K562 (cell line): ENCODE measurements at regions of chr7 and their contacts with region 1.

Region 1: DNA sequence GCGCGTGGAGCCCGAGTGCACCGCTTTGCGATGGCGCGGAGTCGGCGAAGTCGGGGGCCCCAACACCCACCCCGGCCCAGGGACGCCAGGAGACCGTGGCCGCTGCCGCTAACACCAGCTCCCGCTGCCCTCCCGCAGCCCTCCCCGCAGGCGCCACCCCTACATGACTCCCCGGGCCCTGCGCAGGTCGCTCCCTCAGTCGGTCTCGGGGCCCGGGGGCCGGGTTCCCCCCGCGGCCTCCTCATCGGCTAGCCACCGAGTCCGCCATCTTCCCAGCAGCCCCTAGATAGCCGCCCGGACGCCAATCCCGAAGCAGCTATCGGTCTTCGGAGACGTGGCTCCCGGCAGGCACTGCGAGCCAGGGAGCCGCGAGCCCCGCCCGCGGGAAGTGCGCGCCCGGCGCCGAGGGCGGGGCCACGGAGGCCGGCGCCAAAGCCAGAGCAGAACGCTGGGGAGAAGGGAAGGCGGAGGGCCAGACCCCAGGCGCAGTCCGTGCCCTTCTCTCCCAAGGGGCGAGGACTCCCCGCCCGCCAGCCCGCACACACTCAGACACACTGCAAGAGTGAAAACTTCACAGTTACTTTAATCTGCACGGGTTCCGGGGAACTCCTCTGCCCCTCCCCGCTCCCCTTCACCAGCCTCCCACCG is at the start of gene FASTK:
- DNase-seq: peak; percentile 87 to 97 (median 92)
- ATAC-seq: peak; percentile 81
- H3K4me3 ChIP-seq: peak within 1 kb of the TSS; percentile 89
- H3K27ac ChIP-seq: peak within 1 kb of the TSS; percentile 94
- H3K4me1 ChIP-seq: peaks cover 48 to 88% of the 10 kb centered on the region in 2 experiments
- H3K27me3 ChIP-seq: no peaks in the 10 kb centered on the region
- CTCF ChIP-seq: no peak
- EP300 ChIP-seq: peak; percentile 22; the same call in 1 of the 2 replicates
- POLR2A ChIP-seq: peak; percentile 95
- RAD21 ChIP-seq: no peak
- polyA plus RNA-seq, gene FASTK: 0.51 to 2.7 TPM

Region 2: DNA sequence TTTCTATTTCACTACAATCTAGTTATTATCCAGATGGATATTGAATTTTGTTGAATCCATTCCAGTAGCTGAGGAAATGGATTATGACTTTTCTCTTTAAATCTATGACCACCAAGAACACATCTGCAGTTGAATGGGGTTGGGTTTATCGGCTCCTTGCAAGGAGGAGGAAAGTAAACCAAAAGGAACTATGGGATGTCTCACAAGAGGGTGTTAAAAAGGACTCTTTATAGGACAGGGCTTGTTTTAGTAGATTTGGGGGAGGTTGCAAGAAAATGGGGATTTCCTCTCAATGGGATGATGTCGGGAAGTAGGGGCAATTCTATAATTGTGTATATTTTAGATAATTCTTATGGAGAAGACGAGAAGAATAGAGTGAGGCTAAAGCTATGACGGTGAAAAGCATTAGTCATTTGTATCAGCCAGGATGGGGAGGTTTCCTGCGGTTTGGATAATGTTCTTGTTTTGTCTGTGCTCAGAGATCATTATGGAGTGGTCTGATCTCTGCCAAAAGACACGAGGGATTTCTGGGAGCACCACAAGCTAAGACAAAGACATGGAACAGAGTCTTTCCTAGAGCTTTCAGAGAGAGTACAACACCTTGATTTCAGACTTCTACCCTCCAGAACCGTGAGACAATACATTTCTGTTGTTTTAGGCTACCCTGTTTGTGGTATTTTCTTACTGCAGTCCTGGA is 762.8 kb before region 1 on chr7:
- CTCF ChIA-PET with region 1: no interaction called
- POLR2A ChIA-PET with region 1: no interaction called
- in situ Hi-C with region 1: no loop called
- intact Hi-C with region 1: loop called (anchors 10 kb)
- DNase-seq: peak; percentile 51 to 88 (median 60)
- ATAC-seq: peak; percentile 48
- H3K4me3 ChIP-seq: no peak overlapping the region
- H3K27ac ChIP-seq: peak overlapping the region; percentile 76
- H3K4me1 ChIP-seq: peaks cover 50 to 89% of the 10 kb centered on the region in 2 experiments
- H3K27me3 ChIP-seq: no peaks in the 10 kb centered on the region
- CTCF ChIP-seq: no peak
- EP300 ChIP-seq: peak; percentile 77
- POLR2A ChIP-seq: no peak
- RAD21 ChIP-seq: peak; percentile 11; a peak in 2 of 4 replicates

Region 3: GRCh38 chr7:150895809-150896208 is 184.8 kb before region 1 on chr7:
- CTCF ChIA-PET with region 1: no interaction called
- POLR2A ChIA-PET with region 1: no interaction called
- in situ Hi-C with region 1: no loop called
- intact Hi-C with region 1: no loop called
- DNase-seq: peak in 2 of 4 experiments; percentile 6 to 29
- ATAC-seq: no peak
- H3K4me3 ChIP-seq: no peak overlapping the region
- H3K27ac ChIP-seq: no peak overlapping the region
- H3K4me1 ChIP-seq: peaks cover 5 to 11% of the 10 kb centered on the region in 2 experiments; a peak in 3 of 5 replicates
- H3K27me3 ChIP-seq: peaks cover 22 to 38% of the 10 kb centered on the region in 2 experiments; a peak in 4 of 5 replicates
- CTCF ChIP-seq: no peak
- EP300 ChIP-seq: no peak
- POLR2A ChIP-seq: no peak
- RAD21 ChIP-seq: no peak

Region 4: DNA sequence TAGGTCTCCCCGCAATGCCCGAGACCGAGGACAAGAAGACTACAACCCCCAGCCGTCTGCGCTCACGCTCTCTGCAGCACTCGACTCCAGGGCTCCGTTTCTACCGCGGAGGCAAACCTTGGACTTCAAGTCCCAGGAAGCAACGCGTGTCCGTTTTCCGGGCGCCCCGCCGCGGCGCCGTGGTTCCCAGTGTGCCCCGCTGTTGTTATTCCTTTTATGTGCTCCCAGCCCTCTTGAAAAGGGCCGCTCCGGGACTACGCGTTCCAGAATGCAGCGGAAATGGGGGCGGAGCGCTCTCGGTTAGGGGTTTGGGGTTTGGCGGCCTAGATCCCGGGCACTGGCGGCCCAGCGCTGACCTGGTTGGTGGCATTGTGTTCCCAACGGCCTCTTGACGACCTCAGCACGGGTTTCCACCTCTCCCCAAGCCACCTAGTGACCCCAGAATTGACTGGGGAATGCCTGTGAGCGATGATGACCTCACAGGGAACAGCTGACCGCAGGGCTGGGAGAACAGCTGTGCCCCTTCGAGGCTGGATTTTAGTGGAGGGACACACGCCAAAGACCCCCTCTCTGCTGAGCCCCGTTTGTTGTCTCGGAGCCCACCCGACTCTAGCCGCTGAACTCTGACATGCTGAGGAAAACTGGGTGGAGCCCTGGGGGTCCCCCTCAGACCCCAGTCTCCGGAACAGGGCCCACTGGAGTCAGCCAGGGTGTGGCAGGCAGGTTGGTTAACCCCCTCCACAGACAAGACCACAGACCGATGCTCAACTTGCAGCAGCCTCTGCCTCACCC is 22.5 kb before region 1 on chr7:
- CTCF ChIA-PET with region 1: no interaction called
- POLR2A ChIA-PET with region 1: interaction called, 9 read pairs
- in situ Hi-C with region 1: no loop called
- intact Hi-C with region 1: loop called (anchors 1 kb)
- DNase-seq: peak; percentile 96 to 100 (median 98)
- ATAC-seq: peak; percentile 86
- H3K4me3 ChIP-seq: peak overlapping the region; percentile 84
- H3K27ac ChIP-seq: peak overlapping the region; percentile 90
- H3K4me1 ChIP-seq: peaks cover 59 to 75% of the 10 kb centered on the region in 2 experiments
- H3K27me3 ChIP-seq: no peaks in the 10 kb centered on the region
- CTCF ChIP-seq: no peak
- EP300 ChIP-seq: peak; percentile 19; the same call in 1 of the 2 replicates
- POLR2A ChIP-seq: peak; percentile 79
- RAD21 ChIP-seq: 0 out of 4 replicates have a peak, but pooled peaks of 1 of the 2 experiments have one; percentile 7

Region 5: DNA sequence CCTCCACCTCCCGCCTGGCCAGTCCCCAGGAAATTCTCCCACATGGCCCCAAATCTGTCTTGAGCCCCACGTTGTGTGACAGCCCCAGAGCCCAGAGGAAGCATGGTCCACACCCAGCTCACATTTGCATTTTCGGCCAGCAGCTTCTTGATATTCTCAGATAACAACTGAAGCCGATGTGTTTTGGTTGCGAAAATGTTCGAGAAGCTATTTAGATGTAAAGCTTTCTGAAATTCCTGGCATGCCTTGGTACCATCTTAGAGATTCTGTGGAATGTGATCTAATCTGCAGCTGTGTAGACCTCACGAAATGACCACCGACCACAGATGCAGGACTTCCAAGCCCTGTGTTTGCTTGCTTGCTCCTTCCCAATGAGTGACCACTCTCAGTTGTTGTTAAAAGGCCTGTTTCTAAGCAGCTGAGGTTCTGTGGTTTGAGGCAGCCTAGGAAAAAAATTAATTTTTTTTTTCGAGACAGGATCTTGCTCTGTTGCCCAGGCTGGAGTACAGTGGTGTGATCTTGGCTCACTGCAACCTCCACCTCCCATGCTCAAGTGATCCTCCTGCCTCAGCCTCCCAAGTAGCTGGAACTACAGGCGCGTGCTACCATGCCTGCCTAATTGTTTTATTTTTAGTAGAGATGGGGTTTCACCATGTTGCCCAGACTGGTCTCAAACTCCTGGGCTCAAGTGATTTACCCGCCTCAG is 12.4 kb before region 1 on chr7:
- CTCF ChIA-PET with region 1: no interaction called
- POLR2A ChIA-PET with region 1: interaction called, 24 read pairs
- in situ Hi-C with region 1: no loop called
- intact Hi-C with region 1: no loop called
- DNase-seq: no peak
- ATAC-seq: no peak
- H3K4me3 ChIP-seq: no peak overlapping the region
- H3K27ac ChIP-seq: no peak overlapping the region
- H3K4me1 ChIP-seq: peaks cover 4 to 53% of the 10 kb centered on the region in 2 experiments
- H3K27me3 ChIP-seq: no peaks in the 10 kb centered on the region
- CTCF ChIP-seq: no peak
- EP300 ChIP-seq: no peak
- POLR2A ChIP-seq: no peak
- RAD21 ChIP-seq: no peak